PC-3 (cell line): ENCODE measurements at regions of chr15 and their contacts with region 1.

Region 1: GRCh38 chr15:52256366-52256765 is 39.2 kb downstream of the MYO5C start:
- DNase-seq: peak; percentile 80
- ATAC-seq: peak; percentile 10; the same call in 1 of the 2 replicates
- H3K4me3 ChIP-seq: no peak overlapping the region
- H3K27ac ChIP-seq: no peak overlapping the region
- H3K4me1 ChIP-seq: peaks cover 42% of the 10 kb centered on the region
- H3K27me3 ChIP-seq: no peaks in the 10 kb centered on the region
- CTCF ChIP-seq: peak; percentile 66

Region 2: DNA sequence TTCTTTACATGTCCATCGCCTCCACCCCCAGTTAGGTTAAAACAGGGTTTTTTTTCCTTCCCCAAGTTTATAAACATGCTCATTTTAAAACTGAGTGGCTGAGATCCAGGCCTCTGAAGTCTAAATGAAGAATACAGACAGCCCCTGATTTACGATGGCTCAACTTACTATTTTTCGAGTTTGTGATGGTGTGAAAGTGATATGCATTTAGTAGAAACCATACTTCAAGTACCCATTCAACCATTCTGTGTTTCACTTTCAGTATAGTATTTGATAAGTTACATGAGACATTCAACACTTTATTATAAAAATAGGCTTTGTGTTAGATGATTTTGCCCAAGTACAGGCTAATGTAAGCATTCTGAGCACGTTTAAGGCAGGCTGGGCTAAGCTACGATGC is 34.6 kb before region 1 on chr15:
- CTCF ChIA-PET with region 1: no interaction called
- POLR2A ChIA-PET with region 1: no interaction called
- intact Hi-C with region 1: no loop called
- DNase-seq: no peak
- ATAC-seq: no peak
- H3K4me3 ChIP-seq: no peak overlapping the region
- H3K27ac ChIP-seq: no peak overlapping the region
- H3K4me1 ChIP-seq: no peaks in the 10 kb centered on the region
- H3K27me3 ChIP-seq: no peaks in the 10 kb centered on the region
- CTCF ChIP-seq: no peak

Region 3: GRCh38 chr15:52288051-52288942 is 31.9 kb after region 1 on chr15:
- CTCF ChIA-PET with region 1: interaction called, 9 read pairs
- POLR2A ChIA-PET with region 1: no interaction called
- intact Hi-C with region 1: loop called (anchors 2 kb)
- DNase-seq: peak; percentile 93
- ATAC-seq: peak; percentile 91
- H3K4me3 ChIP-seq: peak overlapping the region; percentile 30; the same call in 1 of the 2 replicates
- H3K27ac ChIP-seq: peak overlapping the region; percentile 98
- H3K4me1 ChIP-seq: peaks cover 44% of the 10 kb centered on the region
- H3K27me3 ChIP-seq: no peaks in the 10 kb centered on the region
- CTCF ChIP-seq: no peak

Region 4: DNA sequence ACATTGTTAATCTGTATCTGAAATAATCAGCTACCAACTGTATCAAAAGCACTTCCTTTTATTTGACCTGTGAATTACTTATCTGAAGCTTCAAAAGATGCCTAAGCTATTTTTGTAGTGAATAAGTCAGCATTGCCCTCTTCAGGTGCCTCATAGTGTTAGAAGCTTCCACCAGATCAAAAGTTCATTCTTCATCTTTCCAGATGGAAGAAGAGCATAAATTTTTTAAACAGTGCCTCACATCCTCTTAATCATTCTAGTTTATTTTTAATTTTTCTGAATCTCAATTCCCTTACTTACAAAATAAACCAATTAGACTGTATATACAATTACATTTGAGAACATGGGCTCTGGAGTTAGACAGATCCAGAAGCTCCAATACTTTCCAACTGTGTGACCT is 207.3 kb after region 1 on chr15:
- CTCF ChIA-PET with region 1: no interaction called
- POLR2A ChIA-PET with region 1: interaction called, 3 read pairs
- intact Hi-C with region 1: loop called (anchors 2 kb)
- DNase-seq: peak; percentile 19
- ATAC-seq: peak; percentile 55
- H3K4me3 ChIP-seq: no peak overlapping the region
- H3K27ac ChIP-seq: no peak overlapping the region; the same call in 1 of the 2 replicates
- H3K4me1 ChIP-seq: peaks cover 10% of the 10 kb centered on the region; the same call in 1 of the 2 replicates
- H3K27me3 ChIP-seq: no peaks in the 10 kb centered on the region
- CTCF ChIP-seq: peak; percentile 43; the same call in 1 of the 2 replicates

Region 5: DNA sequence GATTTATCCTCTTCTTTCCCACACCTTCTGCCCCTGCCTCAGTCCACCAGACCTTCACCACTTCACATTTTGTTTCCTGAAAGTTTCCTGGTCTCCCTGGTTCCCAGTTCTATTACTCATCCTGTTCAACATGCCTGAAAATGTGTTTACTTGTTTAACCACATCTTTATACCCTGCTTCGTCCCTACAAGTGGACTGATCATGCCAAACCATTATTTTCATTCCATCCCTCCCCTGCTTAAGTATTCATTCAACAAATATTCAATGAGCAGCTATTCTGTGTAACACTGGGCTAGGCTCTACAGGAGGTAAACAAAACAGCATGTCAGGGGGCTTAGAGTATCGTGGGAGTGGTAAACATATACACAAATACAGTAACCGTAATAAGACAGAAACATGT is 266.8 kb after region 1 on chr15:
- CTCF ChIA-PET with region 1: interaction called, 11 read pairs
- POLR2A ChIA-PET with region 1: no interaction called
- intact Hi-C with region 1: loop called (anchors 5 kb)
- DNase-seq: peak; percentile 58
- ATAC-seq: peak; percentile 65
- H3K4me3 ChIP-seq: no peak overlapping the region
- H3K27ac ChIP-seq: peak overlapping the region; percentile 45
- H3K4me1 ChIP-seq: peaks cover 36% of the 10 kb centered on the region
- H3K27me3 ChIP-seq: no peaks in the 10 kb centered on the region
- CTCF ChIP-seq: no peak

Region 6: DNA sequence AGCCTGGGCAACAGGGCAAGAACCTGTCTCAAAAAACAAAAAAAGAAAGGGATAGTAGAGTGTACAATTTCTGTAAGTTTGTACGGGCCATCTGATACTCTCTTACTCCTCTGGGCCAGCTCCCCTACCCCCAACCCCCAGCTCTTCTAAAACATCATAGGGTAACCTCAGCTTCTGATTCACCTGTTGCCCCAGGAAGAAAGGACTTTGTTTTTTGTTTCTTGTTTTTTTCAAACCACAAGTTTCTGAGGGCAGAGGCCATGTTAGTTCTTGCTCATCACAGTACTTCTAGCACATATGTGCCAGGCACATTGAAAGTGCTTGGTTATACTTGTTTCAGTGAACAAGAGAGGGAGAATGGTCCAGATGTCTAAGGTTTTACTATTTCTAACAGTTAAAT is 402.6 kb after region 1 on chr15:
- CTCF ChIA-PET with region 1: no interaction called
- POLR2A ChIA-PET with region 1: no interaction called
- intact Hi-C with region 1: loop called (anchors 5 kb)
- DNase-seq: peak; percentile 66
- ATAC-seq: peak; percentile 16
- H3K4me3 ChIP-seq: no peak overlapping the region
- H3K27ac ChIP-seq: peak overlapping the region; percentile 23
- H3K4me1 ChIP-seq: peaks cover 53% of the 10 kb centered on the region
- H3K27me3 ChIP-seq: no peaks in the 10 kb centered on the region
- CTCF ChIP-seq: no peak

Region 7: DNA sequence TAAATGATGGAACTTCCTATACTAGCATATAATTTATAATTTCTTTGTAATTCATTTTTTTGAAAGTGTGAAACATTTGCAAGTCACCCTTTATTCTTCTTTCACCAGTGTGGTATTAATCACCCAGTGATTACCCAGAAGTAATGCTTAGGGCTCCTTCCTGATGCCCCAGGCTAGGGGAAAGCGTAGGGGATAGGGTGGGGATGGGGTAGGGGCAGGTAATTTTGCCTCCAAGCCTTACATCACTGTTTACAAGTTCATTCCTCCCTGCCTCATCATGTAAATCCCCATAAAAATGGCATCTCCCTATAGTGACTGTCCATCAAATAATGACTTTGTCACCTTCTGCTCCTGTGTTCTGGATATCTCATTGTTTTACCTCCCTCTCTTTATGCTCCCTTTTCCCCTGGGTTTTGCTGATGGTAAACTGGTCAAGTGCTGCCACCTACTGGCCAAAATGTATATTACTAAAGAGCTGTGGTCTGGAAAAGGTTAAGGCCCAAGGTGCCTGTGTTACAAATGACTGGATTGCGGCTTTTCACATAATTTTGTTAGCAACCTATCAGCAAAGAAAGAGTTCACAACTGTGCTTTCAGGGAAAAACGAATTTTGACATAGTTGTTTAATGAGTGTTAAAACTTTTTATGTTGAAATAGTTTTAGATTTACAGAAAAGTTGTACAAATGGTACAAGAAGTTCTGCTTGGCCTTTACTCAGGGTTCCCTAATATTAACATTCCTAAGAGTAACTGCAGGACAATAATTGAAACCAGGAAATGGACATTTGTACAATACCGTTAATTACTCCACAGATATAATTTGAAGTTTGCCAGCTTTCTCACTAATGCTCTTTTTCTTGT is 479.1 kb after region 1 on chr15:
- CTCF ChIA-PET with region 1: no interaction called
- POLR2A ChIA-PET with region 1: no interaction called
- intact Hi-C with region 1: loop called (anchors 1 kb)
- DNase-seq: peak; percentile 90
- ATAC-seq: peak; percentile 91
- H3K4me3 ChIP-seq: no peak overlapping the region
- H3K27ac ChIP-seq: no peak overlapping the region
- H3K4me1 ChIP-seq: no peaks in the 10 kb centered on the region
- H3K27me3 ChIP-seq: no peaks in the 10 kb centered on the region
- CTCF ChIP-seq: peak; percentile 87